CD4-positive, alpha-beta T cell (primary cell): ENCODE measurements at regions of chr12 and their contacts with region 1.

Region 1: DNA sequence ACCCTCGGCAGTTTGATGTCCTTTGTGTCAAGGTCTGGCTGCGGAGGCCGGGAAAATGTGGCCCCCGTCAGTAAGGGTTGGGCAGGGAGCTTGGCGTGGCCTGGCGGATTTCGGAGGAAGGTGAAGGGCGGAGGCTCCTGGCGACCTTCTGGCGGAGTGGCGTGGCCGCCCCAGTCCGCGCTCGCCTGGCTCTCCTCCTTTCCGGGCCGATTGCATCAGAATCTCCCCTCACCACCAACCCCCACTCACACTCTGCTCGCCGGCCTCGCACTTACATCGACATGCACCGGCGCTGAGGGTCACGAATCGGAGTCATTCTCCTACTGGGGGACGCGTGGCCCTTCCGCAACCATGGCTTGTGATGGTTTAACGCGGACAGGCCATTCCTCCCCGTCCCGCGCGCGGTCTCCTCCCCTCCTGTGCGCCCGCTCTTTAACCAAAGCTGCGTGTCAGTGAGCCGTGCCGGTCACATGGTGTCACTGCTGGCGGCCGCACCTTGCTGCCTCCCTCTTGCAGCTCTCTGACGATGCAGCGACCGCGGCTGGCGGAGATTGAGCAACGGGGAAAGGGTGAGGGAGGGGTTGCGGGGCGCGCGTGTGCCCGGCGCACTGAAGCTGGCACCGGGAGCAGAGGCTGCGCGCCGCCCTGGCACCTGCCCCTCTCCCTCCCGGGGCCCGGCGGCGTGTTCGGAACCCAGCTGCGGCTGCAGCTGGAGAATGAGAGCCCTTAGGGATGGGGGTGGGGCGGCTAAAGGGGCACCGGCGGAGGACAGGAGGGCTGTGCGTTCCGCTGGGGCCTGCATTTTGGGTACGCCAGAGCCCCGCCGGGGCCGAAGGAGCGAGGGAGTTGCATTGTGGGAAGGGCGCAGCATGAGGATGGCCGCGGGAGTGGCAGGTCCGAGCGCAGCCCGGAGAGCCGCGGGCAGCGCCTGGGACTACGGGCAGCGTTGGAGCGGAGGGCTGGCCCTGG is at the start of gene SLC38A1:
- DNase-seq: peak; percentile 81 to 96 (median 88)
- ATAC-seq: peak; percentile 65
- H3K4me3 ChIP-seq: peak within 1 kb of the TSS; percentile 90
- H3K4me3 Mint-ChIP-seq: no peak within 1 kb of the TSS
- H3K27ac ChIP-seq: peak within 1 kb of the TSS; percentile 96 to 99
- H3K27ac Mint-ChIP-seq: no peak within 1 kb of the TSS
- H3K4me1 ChIP-seq: peaks cover 41% of the 10 kb centered on the region
- H3K4me1 Mint-ChIP-seq: peaks cover 43% of the 10 kb centered on the region
- H3K27me3 ChIP-seq: no peaks in the 10 kb centered on the region
- H3K27me3 Mint-ChIP-seq: no peaks in the 10 kb centered on the region
- CTCF ChIP-seq: no peak
- total RNA-seq, gene SLC38A1: 327 to 346 TPM

Region 2: DNA sequence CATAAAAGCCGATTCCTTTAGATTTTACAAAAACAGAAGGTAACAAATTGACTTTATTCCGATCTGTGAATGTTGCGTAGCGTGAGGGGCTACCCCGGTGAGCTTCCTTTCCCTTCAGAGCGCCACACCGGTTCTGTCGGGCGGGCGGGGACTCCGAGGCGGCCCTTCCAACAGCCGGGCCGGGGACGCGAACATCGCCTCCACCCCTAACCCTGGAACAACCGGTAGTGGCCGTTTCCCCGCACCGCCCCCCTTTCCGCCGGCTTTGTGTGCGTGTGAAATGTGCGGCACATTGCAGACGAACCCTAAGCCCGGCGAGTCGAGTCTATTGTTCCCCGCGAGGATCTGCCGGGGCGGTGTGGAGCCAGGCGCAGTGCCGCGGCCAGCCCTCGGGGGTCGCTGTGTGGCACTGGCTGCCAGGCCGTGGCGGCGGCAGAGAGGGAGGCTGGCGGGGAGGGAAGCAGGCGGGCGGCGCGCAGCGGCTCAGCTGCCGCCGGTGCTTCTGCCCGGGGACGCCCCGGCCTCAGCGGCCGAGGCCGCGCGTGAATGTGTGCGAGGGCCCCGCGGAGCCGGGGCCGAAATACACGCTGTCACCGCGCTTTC is 540.1 kb before region 1 on chr12:
- CTCF ChIA-PET with region 1: interaction called, 3 read pairs
- POLR2A ChIA-PET with region 1: interaction called, 25 read pairs
- intact Hi-C with region 1: loop called in 1 of 2 experiments (anchors 10 kb)
- DNase-seq: peak; percentile 94 to 99 (median 96)
- ATAC-seq: peak; percentile 71
- H3K4me3 ChIP-seq: peak overlapping the region; percentile 77
- H3K4me3 Mint-ChIP-seq: peak overlapping the region; percentile 100
- H3K27ac ChIP-seq: peak overlapping the region; percentile 98 to 99
- H3K27ac Mint-ChIP-seq: peak overlapping the region; percentile 84
- H3K4me1 ChIP-seq: peaks cover 8% of the 10 kb centered on the region
- H3K4me1 Mint-ChIP-seq: peaks cover 37% of the 10 kb centered on the region
- H3K27me3 ChIP-seq: no peaks in the 10 kb centered on the region
- H3K27me3 Mint-ChIP-seq: no peaks in the 10 kb centered on the region
- CTCF ChIP-seq: peak; percentile 89

Region 3: GRCh38 chr12:46160101-46160980 is 108.5 kb before region 1 on chr12:
- CTCF ChIA-PET with region 1: interaction called, 3 read pairs
- POLR2A ChIA-PET with region 1: interaction called, 11 read pairs
- intact Hi-C with region 1: no loop called
- DNase-seq: no peak
- ATAC-seq: no peak
- H3K4me3 ChIP-seq: no peak overlapping the region
- H3K4me3 Mint-ChIP-seq: no peak overlapping the region
- H3K27ac ChIP-seq: no peak overlapping the region
- H3K27ac Mint-ChIP-seq: no peak overlapping the region
- H3K4me1 ChIP-seq: no peaks in the 10 kb centered on the region
- H3K4me1 Mint-ChIP-seq: peaks cover 11% of the 10 kb centered on the region
- H3K27me3 ChIP-seq: no peaks in the 10 kb centered on the region
- H3K27me3 Mint-ChIP-seq: no peaks in the 10 kb centered on the region
- CTCF ChIP-seq: no peak

Region 4: GRCh38 chr12:46209914-46210872 is 58.7 kb before region 1 on chr12:
- CTCF ChIA-PET with region 1: interaction called, 13 read pairs
- POLR2A ChIA-PET with region 1: interaction called, 418 read pairs
- intact Hi-C with region 1: loop called (anchors 1 to 2 kb)
- DNase-seq: peak in 13 of 14 experiments; percentile 30 to 82 (median 60)
- ATAC-seq: peak; percentile 68
- H3K4me3 ChIP-seq: no peak overlapping the region
- H3K4me3 Mint-ChIP-seq: peak overlapping the region; percentile 36
- H3K27ac ChIP-seq: peak overlapping the region; percentile 69 to 82
- H3K27ac Mint-ChIP-seq: peak overlapping the region; percentile 96
- H3K4me1 ChIP-seq: peaks cover 45% of the 10 kb centered on the region
- H3K4me1 Mint-ChIP-seq: peaks cover 99% of the 10 kb centered on the region
- H3K27me3 ChIP-seq: no peaks in the 10 kb centered on the region
- H3K27me3 Mint-ChIP-seq: no peaks in the 10 kb centered on the region
- CTCF ChIP-seq: no peak

Region 5: DNA sequence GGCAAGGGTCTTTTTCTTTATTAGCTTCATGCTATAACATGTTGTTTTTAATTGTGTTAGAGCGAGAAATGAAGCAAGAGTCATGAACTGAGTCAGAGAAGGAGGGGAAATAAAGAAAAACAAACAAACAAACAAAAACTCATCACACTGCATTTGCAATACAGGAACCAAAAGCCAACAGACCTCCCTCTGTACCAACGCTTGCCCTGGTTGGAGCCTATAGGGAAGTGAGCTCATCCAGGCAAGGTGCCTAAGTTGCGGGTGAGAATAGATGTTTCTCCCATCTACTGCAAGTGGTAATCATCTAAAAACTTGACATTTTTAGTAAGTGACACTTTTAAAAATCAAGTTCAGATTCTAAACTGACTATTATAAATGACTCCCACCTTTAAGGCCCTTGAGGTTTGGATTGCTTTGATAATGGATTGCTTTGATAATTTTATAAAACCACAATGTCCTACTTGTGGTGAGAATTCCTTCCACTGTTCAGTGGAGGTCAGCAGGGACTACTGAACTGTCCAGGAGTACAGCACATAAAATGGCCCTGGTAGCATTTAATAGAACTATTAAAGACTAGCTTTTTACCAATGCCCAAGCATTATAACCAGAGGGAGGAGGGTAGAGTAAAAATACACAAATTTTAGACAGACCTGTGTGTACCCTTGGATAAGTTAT is 31.4 kb before region 1 on chr12:
- CTCF ChIA-PET with region 1: interaction called, 4 read pairs
- POLR2A ChIA-PET with region 1: interaction called, 25 read pairs
- intact Hi-C with region 1: no loop called
- DNase-seq: peak in 2 of 14 experiments; percentile 27 to 40
- ATAC-seq: no peak
- H3K4me3 ChIP-seq: no peak overlapping the region
- H3K4me3 Mint-ChIP-seq: peak overlapping the region; percentile 4
- H3K27ac ChIP-seq: peak overlapping the region in 1 of 2 donors; percentile 4
- H3K27ac Mint-ChIP-seq: peak overlapping the region; percentile 56
- H3K4me1 ChIP-seq: peaks cover 28% of the 10 kb centered on the region
- H3K4me1 Mint-ChIP-seq: peaks cover 87% of the 10 kb centered on the region
- H3K27me3 ChIP-seq: no peaks in the 10 kb centered on the region
- H3K27me3 Mint-ChIP-seq: no peaks in the 10 kb centered on the region
- CTCF ChIP-seq: no peak

Region 6: DNA sequence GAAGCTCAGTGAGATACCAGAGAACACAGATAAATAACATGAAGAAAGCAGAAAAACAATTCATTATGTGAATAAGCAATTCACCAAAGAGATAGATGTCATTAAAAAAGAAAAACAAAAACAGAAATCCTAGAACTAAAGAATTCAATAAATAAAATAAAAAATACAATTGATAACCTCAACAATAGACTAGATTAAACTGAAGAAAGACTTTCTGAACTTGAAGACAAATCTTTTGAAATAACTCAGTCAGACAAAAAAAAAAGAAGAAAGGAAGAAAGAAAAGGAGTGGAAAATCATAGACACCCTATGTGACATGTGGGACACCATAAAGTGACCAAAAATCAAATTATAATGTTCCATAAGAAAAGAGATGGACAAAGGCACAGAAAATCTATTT is 14.0 kb after region 1 on chr12:
- CTCF ChIA-PET with region 1: no interaction called
- POLR2A ChIA-PET with region 1: interaction called, 27 read pairs
- intact Hi-C with region 1: no loop called
- DNase-seq: no peak
- ATAC-seq: no peak
- H3K4me3 ChIP-seq: no peak overlapping the region
- H3K4me3 Mint-ChIP-seq: no peak overlapping the region
- H3K27ac ChIP-seq: no peak overlapping the region
- H3K27ac Mint-ChIP-seq: no peak overlapping the region
- H3K4me1 ChIP-seq: no peaks in the 10 kb centered on the region
- H3K4me1 Mint-ChIP-seq: no peaks in the 10 kb centered on the region
- H3K27me3 ChIP-seq: no peaks in the 10 kb centered on the region
- H3K27me3 Mint-ChIP-seq: no peaks in the 10 kb centered on the region
- CTCF ChIP-seq: no peak

Region 7: DNA sequence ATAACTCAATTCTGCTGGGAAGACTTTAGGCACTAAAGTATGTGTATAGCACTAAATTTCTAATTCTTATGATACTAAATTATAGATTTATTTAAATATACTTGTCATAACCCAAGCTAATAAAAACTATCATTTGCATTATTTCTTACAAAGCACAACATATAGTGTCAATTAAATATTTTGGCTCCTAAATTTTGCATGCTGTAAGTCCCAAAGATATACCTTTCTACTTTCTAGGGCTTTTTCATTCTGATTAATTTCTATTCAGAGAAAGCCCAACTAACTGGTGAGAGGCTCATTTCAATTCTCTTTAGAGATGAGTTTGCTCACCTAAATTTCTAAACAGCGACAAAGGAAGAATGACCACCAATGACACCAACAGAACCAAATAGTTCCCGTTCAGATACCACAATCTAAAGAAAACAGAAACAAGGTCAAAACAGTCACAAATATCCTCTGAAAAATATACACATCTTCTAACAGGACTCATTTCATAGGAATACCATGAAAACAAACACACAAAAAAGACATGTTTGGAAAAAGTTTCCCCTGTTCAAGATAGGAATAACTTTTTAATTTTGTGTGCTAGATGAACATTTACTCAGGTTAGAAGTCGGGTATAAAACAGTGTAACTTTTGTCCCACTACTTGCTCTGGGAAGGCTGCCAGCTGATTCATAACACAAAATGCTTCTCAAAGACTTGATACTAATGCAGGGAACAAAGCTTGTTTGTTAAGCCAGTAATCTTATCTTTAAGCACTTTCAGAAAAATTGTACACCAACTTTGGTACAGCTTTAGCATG is 96.1 kb after region 1 on chr12:
- CTCF ChIA-PET with region 1: no interaction called
- POLR2A ChIA-PET with region 1: interaction called, 76 read pairs
- intact Hi-C with region 1: loop called in 1 of 2 experiments (anchors 5 kb)
- DNase-seq: no peak
- ATAC-seq: no peak
- H3K4me3 ChIP-seq: no peak overlapping the region
- H3K4me3 Mint-ChIP-seq: peak overlapping the region; percentile 30
- H3K27ac ChIP-seq: no peak overlapping the region
- H3K27ac Mint-ChIP-seq: peak overlapping the region; percentile 64
- H3K4me1 ChIP-seq: peaks cover 16% of the 10 kb centered on the region
- H3K4me1 Mint-ChIP-seq: peaks cover 89% of the 10 kb centered on the region
- H3K27me3 ChIP-seq: no peaks in the 10 kb centered on the region
- H3K27me3 Mint-ChIP-seq: no peaks in the 10 kb centered on the region
- CTCF ChIP-seq: no peak